MCF 10A (cell line): ENCODE measurements at regions of chr4 and their contacts with region 1.

Region 1: GRCh38 chr4:11954093-11954492 is 525.4 kb upstream of the HS3ST1 start:
- DNase-seq: peak; percentile 52
- H3K4me3 Mint-ChIP-seq: no peak overlapping the region
- H3K27ac Mint-ChIP-seq: no peak overlapping the region
- H3K4me1 Mint-ChIP-seq: no peaks in the 10 kb centered on the region
- H3K27me3 Mint-ChIP-seq: no peaks in the 10 kb centered on the region
- CTCF ChIP-seq: peak; percentile 36

Region 2: DNA sequence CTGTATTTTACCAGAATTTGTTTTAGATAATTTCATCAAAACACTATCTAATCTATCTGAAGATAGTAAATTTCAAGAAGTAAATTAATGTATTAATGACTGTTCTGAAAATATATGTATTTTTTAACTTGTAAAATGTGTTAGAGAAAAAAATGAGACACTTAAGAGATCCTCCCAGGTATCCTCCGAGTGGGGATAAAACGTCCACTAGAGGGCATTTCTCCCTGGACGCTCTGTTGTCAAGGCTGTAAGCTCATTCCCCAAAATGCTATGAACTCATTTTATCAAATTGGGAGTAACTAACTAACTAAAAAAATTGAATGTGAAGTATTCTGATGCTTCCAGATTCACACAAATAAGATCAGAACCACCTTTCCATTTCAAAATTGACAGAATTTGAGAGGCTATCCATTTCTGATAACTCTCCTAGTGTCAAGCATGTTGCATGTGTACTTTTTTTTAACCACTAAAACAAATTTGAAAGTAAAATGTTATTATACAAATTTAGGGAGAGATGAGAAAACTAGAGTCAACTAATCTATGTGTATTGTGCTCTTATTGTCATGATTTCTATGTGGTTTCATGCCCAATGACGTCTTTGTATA is 188.1 kb before region 1 on chr4:
- CTCF ChIA-PET with region 1: no interaction called
- POLR2A ChIA-PET with region 1: no interaction called
- intact Hi-C with region 1: loop called (anchors 1 kb)
- DNase-seq: peak; percentile 59
- H3K4me3 Mint-ChIP-seq: no peak overlapping the region
- H3K27ac Mint-ChIP-seq: no peak overlapping the region
- H3K4me1 Mint-ChIP-seq: no peaks in the 10 kb centered on the region
- H3K27me3 Mint-ChIP-seq: no peaks in the 10 kb centered on the region
- CTCF ChIP-seq: peak; percentile 65

Region 3: DNA sequence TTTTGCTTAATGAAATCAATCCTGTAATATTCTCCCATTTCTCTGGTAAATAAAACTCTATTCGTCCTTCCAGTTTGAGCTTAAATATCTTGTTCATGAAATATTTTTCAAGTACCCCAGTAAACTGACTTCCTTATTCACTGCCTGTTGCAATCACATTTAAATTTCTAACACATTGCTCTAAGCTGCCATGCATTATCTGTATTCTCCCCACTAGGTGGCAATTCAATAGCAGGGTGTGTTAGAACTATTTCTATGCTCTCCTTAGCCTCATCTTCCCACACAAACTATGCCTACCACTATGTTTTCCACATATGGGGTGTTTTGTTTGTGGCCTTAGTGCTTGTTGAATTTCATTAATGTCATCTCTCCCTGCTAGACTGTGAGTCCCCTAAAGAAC is 148.3 kb before region 1 on chr4:
- CTCF ChIA-PET with region 1: interaction called, 5 read pairs
- POLR2A ChIA-PET with region 1: no interaction called
- intact Hi-C with region 1: loop called (anchors 1 kb)
- DNase-seq: peak; percentile 61
- H3K4me3 Mint-ChIP-seq: no peak overlapping the region
- H3K27ac Mint-ChIP-seq: no peak overlapping the region
- H3K4me1 Mint-ChIP-seq: no peaks in the 10 kb centered on the region
- H3K27me3 Mint-ChIP-seq: no peaks in the 10 kb centered on the region
- CTCF ChIP-seq: peak; percentile 64

Region 4: DNA sequence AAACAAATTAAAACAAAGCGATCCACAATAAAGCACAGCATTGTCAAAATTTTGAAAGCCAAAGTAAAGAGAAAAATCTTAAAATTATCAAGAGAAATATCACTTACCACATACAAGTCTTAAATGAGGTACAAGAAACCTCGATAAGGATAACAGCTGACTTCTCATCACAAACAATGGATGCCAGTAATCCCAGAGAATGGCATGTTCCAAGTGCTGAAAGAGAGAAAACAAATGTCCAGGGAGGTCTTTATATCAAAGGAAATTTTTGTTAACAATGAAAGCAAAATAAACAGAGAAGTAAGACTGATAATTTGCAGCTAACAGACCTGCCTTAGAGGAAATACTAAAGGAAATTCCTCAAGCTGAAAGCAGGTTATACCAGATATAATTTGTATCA is 65.0 kb before region 1 on chr4:
- CTCF ChIA-PET with region 1: no interaction called
- POLR2A ChIA-PET with region 1: no interaction called
- intact Hi-C with region 1: no loop called
- DNase-seq: no peak
- H3K4me3 Mint-ChIP-seq: no peak overlapping the region
- H3K27ac Mint-ChIP-seq: no peak overlapping the region
- H3K4me1 Mint-ChIP-seq: no peaks in the 10 kb centered on the region
- H3K27me3 Mint-ChIP-seq: no peaks in the 10 kb centered on the region
- CTCF ChIP-seq: no peak

Region 5: DNA sequence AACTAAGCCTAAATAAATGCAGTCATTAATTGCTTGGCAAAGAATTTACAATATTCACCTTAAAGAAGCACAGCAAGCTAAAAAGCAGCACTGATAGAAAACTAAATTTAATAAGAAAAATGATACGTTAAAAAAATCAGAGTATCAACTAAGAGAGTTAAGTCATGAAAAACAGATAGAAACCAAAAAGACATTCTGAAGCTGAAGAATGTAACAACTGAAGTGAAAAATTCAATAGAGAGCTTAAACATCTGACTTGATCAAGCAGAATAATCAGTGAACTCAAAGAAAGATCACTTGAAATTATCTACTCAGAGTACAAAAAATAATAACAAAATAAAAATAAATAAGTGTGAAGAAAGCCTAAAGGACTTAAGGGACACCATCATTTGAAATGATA is 62.6 kb after region 1 on chr4:
- CTCF ChIA-PET with region 1: no interaction called
- POLR2A ChIA-PET with region 1: no interaction called
- intact Hi-C with region 1: no loop called
- DNase-seq: no peak
- H3K4me3 Mint-ChIP-seq: no peak overlapping the region
- H3K27ac Mint-ChIP-seq: no peak overlapping the region
- H3K4me1 Mint-ChIP-seq: no peaks in the 10 kb centered on the region
- H3K27me3 Mint-ChIP-seq: no peaks in the 10 kb centered on the region
- CTCF ChIP-seq: no peak

Region 6: GRCh38 chr4:12211636-12212035 is 257.5 kb after region 1 on chr4:
- CTCF ChIA-PET with region 1: no interaction called
- POLR2A ChIA-PET with region 1: no interaction called
- intact Hi-C with region 1: no loop called
- DNase-seq: no peak
- H3K4me3 Mint-ChIP-seq: no peak overlapping the region
- H3K27ac Mint-ChIP-seq: no peak overlapping the region
- H3K4me1 Mint-ChIP-seq: no peaks in the 10 kb centered on the region
- H3K27me3 Mint-ChIP-seq: no peaks in the 10 kb centered on the region
- CTCF ChIP-seq: no peak